PC-9 (cell line): ENCODE measurements at regions of chr11 and their contacts with region 1.

Region 1: GRCh38 chr11:123103326-123103980 is 41.5 kb upstream of the HSPA8 start:
- DNase-seq: peak; percentile 33 to 60
- H3K4me3 ChIP-seq: no peak overlapping the region
- H3K27ac ChIP-seq: no peak overlapping the region
- H3K4me1 ChIP-seq: no peaks in the 10 kb centered on the region
- H3K27me3 ChIP-seq: no peaks in the 10 kb centered on the region
- CTCF ChIP-seq: peak; percentile 82

Region 2: GRCh38 chr11:122843281-122844141 is 259.9 kb before region 1 on chr11:
- CTCF ChIA-PET with region 1: no interaction called
- POLR2A ChIA-PET with region 1: no interaction called
- intact Hi-C with region 1: no loop called
- DNase-seq: no peak
- H3K4me3 ChIP-seq: no peak overlapping the region
- H3K27ac ChIP-seq: no peak overlapping the region
- H3K4me1 ChIP-seq: no peaks in the 10 kb centered on the region
- H3K27me3 ChIP-seq: no peaks in the 10 kb centered on the region
- CTCF ChIP-seq: no peak

Region 3: DNA sequence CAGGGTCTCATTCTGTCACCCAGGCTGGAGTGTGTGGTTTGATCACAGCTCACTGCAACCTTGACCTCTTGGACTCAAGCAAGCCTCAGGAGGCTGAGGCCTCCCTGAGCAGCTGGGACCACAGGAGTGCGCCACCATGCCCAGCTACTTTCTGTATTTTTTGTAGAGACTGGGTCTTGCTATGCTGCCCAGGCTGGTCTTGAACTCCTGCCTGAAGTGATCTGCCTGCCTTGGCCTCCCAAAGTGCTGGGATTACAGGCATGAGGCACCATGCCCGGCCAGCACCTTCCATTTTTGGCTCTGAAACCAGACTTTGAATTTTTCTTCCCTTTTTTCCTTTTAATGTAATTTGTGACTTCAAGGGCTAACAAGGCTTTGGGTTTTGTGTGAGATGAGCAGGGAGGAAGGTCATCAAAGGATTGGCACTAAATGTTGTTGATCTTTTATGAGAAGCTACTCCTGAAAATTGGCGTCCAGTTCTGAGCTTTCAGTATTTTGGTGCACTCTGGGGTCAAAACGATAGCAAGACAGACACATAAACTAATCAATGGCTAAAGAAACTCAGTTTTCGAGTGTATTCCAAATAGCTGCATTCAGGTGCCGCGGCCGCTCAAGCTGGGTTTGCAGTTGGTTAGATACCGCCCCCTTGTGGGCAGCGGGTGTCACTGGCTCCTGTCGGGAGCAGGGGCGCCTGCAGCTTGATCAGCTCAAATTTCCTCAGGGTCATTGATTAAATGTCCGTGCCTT is 143.5 kb after region 1 on chr11:
- CTCF ChIA-PET with region 1: interaction called, 8 read pairs
- POLR2A ChIA-PET with region 1: no interaction called
- intact Hi-C with region 1: loop called (anchors 2 kb)
- DNase-seq: peak; percentile 54 to 80
- H3K4me3 ChIP-seq: no peak overlapping the region
- H3K27ac ChIP-seq: no peak overlapping the region
- H3K4me1 ChIP-seq: peaks cover 16% of the 10 kb centered on the region
- H3K27me3 ChIP-seq: no peaks in the 10 kb centered on the region
- CTCF ChIP-seq: peak; percentile 94

Region 4: DNA sequence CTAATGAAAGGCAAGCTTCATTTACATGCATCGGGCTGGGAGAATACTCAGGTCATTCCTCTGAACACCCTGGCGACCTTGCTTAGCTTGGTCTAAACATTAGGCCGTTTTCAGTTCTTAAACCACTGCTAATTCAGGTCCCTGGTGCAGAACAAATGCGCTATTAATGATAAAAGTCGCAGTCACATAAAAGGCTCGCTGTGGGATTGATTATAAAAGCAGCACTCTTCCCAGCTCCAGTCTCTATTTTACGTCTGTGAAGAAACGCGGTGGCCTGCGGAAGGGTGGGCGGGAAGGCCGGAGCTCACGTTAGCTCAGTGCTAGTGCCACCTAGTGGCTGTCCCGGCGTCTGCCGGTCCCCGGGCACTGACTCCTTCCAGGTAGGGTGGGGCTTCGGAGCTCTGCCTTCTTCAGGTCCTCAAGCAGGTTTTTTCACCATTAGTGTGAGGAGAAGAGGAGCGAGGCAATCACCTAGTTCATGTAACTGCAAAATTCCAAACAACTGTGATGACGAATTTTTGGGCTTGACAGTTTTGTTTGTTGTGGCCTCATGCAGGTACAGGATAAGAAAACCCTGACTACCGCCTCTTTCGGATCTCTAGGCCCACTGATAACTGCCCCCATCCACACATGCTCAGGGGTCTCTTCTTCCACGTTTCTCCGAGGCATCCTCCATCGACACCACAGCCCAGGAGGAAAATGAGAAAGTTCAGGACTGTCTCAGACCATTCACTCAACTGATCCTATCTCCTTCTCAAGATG is 158.1 kb after region 1 on chr11:
- CTCF ChIA-PET with region 1: interaction called, 15 read pairs
- POLR2A ChIA-PET with region 1: no interaction called
- intact Hi-C with region 1: no loop called
- DNase-seq: peak; percentile 78 to 86
- H3K4me3 ChIP-seq: peak overlapping the region; percentile 32; the same call in 1 of the 2 replicates
- H3K27ac ChIP-seq: no peak overlapping the region
- H3K4me1 ChIP-seq: peaks cover 15% of the 10 kb centered on the region
- H3K27me3 ChIP-seq: no peaks in the 10 kb centered on the region
- CTCF ChIP-seq: peak; percentile 90

Region 5: GRCh38 chr11:123407130-123407995 is 303.9 kb after region 1 on chr11:
- CTCF ChIA-PET with region 1: interaction called, 11 read pairs
- POLR2A ChIA-PET with region 1: no interaction called
- intact Hi-C with region 1: no loop called
- DNase-seq: peak; percentile 55 to 60
- H3K4me3 ChIP-seq: no peak overlapping the region
- H3K27ac ChIP-seq: no peak overlapping the region
- H3K4me1 ChIP-seq: no peaks in the 10 kb centered on the region
- H3K27me3 ChIP-seq: no peaks in the 10 kb centered on the region
- CTCF ChIP-seq: peak; percentile 88

Region 6: GRCh38 chr11:123560006-123560405 is 456.6 kb after region 1 on chr11:
- CTCF ChIA-PET with region 1: no interaction called
- POLR2A ChIA-PET with region 1: no interaction called
- intact Hi-C with region 1: loop called (anchors 10 kb)
- DNase-seq: no peak
- H3K4me3 ChIP-seq: no peak overlapping the region
- H3K27ac ChIP-seq: no peak overlapping the region
- H3K4me1 ChIP-seq: no peaks in the 10 kb centered on the region
- H3K27me3 ChIP-seq: no peaks in the 10 kb centered on the region
- CTCF ChIP-seq: no peak

Region 7: GRCh38 chr11:123707606-123708205 is 604.3 kb after region 1 on chr11:
- CTCF ChIA-PET with region 1: no interaction called
- POLR2A ChIA-PET with region 1: no interaction called
- intact Hi-C with region 1: loop called (anchors 10 kb)
- DNase-seq: peak in 1 of 2 experiments; percentile 54
- H3K4me3 ChIP-seq: no peak overlapping the region
- H3K27ac ChIP-seq: no peak overlapping the region
- H3K4me1 ChIP-seq: no peaks in the 10 kb centered on the region
- H3K27me3 ChIP-seq: peaks cover 18% of the 10 kb centered on the region; the same call in 1 of the 2 replicates
- CTCF ChIP-seq: peak; percentile 79